Activated CD4-positive, alpha-beta T cell treated with anti-CD3 and anti-CD28 coated beads, Interleukin-2, amount 10 ng/mL, durations not matched to agents 7 days and 5 days (primary cell): ENCODE measurements at regions of chr5 and their contacts with region 1.

Region 1: GRCh38 chr5:59107692-59108091 is 524.8 kb downstream of the RAB3C start:
- DNase-seq: no peak
- H3K4me3 Mint-ChIP-seq: no peak overlapping the region
- H3K27ac Mint-ChIP-seq: no peak overlapping the region
- H3K4me1 Mint-ChIP-seq: peaks cover 38% of the 10 kb centered on the region
- H3K27me3 Mint-ChIP-seq: no peaks in the 10 kb centered on the region

Region 2: DNA sequence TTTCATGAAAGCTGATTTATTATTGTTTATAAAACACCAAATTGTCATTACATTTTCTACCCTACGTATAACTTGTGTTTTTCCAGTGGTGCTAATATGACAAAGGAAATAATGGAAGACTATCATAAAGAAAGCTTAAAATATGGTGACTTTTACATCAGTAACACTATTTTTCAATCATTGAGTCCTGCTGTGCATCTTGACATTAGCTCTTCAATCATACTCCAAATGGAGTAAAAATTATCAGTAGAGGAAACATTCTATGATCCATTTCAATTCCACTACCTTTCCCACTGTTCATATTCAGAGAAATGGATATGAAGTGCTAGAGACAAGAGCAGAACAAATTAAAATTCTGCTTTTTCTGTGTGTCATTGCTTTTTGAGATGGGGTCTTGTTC is 11.8 kb after region 1 on chr5:
- CTCF ChIA-PET with region 1: interaction called, 12 read pairs
- POLR2A ChIA-PET with region 1: interaction called, 4 read pairs
- DNase-seq: no peak
- H3K4me3 Mint-ChIP-seq: no peak overlapping the region
- H3K27ac Mint-ChIP-seq: no peak overlapping the region
- H3K4me1 Mint-ChIP-seq: peaks cover 11% of the 10 kb centered on the region
- H3K27me3 Mint-ChIP-seq: no peaks in the 10 kb centered on the region

Region 3: DNA sequence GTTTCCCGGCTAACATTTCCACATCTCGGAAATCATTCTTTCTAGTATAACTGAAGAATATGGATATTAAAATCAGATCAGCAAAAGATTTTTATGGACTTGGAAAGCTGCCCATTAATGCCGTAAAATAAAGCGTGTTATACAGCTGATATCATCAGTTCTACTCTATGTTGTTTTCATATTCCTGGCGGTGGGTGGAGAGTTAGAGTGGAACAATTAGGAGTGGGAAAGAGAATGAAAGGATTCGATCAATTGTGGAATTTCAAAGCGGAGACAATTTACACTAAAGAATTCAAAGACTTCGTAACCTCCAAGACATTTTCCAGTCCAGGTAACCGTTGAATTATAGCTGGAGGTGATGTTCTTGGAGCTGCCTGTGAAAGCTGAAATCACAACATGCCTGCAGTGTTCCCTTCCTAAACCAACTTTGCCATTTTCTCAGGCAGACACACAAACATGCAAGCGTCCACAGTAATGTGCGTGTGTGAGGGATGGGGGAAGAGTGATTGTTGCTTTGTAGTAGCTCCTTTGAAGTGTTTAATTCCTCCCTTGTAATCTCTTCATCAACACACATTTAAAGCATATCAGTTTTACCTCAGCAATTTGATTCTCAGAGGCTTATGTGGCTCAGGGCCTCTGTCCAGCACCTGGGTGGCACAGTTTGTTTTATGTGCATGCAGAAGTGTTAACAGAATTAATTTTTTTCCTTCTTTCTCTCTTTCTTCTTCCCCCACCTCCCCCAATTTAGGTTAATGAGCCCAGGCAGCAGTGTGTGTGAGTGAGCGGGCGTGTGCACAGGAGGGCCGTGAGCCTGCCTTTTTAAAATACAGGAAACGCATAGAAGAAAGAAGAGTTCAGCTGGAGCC is 19.2 kb after region 1 on chr5:
- CTCF ChIA-PET with region 1: interaction called, 10 read pairs
- POLR2A ChIA-PET with region 1: no interaction called
- DNase-seq: no peak
- H3K4me3 Mint-ChIP-seq: no peak overlapping the region
- H3K27ac Mint-ChIP-seq: no peak overlapping the region
- H3K4me1 Mint-ChIP-seq: peaks cover 14% of the 10 kb centered on the region
- H3K27me3 Mint-ChIP-seq: no peaks in the 10 kb centered on the region

Region 4: DNA sequence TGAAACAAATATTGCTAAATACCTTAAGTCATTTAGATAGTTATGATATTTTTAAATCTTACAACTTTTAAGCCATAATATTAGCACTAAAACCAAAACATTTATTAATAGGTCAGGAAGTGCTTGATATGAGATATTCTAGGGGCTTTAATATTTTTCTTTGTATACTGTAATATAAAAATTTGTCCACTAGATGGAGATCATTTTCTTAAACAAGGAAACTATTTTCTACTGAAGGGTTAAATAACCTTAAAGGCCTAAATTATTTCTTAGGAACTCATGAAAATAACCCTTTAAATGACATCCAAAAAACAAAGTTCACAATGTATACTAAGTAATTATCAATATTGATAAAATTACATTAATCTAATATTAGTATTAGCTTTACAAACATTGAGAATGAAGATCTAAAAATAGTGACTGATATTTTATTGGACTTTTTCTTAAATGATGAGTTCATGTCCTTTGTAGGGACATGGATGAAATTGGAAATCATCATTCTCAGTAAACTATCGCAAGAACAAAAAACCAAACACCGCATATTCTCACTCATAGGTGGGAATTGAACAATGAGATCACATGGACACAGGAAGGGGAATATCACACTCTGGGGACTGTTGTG is 110.8 kb after region 1 on chr5:
- CTCF ChIA-PET with region 1: no interaction called
- POLR2A ChIA-PET with region 1: no interaction called
- DNase-seq: no peak
- H3K4me3 Mint-ChIP-seq: no peak overlapping the region
- H3K27ac Mint-ChIP-seq: no peak overlapping the region
- H3K4me1 Mint-ChIP-seq: no peaks in the 10 kb centered on the region
- H3K27me3 Mint-ChIP-seq: peaks cover 21% of the 10 kb centered on the region